ENCODE measurements at regions of chr2 and their contacts with region 1.

Region 1: GRCh38 chr2:152635635-152636298 is 81.5 kb downstream of the PRPF40A start:
- DNase-seq: peak; percentile 78
- ATAC-seq: peak; percentile 90
- H3K4me3 Mint-ChIP-seq: no peak overlapping the region
- H3K27ac Mint-ChIP-seq: no peak overlapping the region
- H3K4me1 Mint-ChIP-seq: no peaks in the 10 kb centered on the region
- H3K27me3 Mint-ChIP-seq: no peaks in the 10 kb centered on the region
- CTCF ChIP-seq: peak; percentile 86

Region 2: GRCh38 chr2:152175458-152176325 is 460.1 kb before region 1 on chr2 and contains the start of gene STAM2:
- CTCF ChIA-PET with region 1: interaction called, 42 read pairs
- POLR2A ChIA-PET with region 1: no interaction called
- DNase-seq: peak; percentile 93
- ATAC-seq: peak; percentile 88
- H3K4me3 Mint-ChIP-seq: peak within 1 kb of the TSS; percentile 93
- H3K27ac Mint-ChIP-seq: peak within 1 kb of the TSS; percentile 99
- H3K4me1 Mint-ChIP-seq: peaks cover 10% of the 10 kb centered on the region
- H3K27me3 Mint-ChIP-seq: peaks cover 20% of the 10 kb centered on the region
- CTCF ChIP-seq: peak; percentile 91
- total RNA-seq, gene STAM2: 9.0 to 12.0 TPM (median 11.1 TPM) in 3 replicates

Region 3: DNA sequence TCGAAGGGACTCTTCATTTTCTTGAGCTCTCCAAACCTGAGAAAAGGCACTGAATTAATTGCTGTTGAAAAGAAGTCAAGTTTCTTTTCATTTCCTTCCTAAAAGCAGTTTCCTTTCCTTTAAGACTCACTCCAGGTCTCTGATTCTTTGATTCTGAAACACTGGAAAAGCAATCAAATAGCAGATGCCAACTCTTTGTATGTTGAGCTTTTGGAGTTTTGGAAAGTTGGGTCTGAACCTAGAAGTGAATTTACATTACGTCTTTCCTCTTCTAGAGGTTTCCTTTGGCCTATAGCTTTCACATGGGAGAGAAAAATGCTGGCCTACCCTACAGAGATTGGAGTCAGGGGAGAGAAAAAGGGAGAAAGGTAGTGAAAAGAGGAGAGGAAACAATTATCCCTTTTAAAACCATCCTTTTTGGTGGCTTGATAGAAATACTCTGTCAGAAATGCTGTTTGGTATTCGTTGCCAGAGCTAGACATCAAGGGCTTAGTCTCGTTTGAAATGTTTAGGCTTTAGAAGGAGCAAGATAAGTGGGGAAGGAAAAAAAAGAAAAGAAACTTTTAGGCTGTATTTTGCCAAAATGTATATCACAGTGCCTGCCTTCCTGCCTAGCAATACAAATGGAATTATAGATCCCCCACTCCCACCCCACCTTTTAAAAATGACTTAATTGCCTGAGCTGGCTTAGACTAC is 106.2 kb before region 1 on chr2:
- CTCF ChIA-PET with region 1: no interaction called
- POLR2A ChIA-PET with region 1: no interaction called
- DNase-seq: no peak
- ATAC-seq: no peak
- H3K4me3 Mint-ChIP-seq: no peak overlapping the region
- H3K27ac Mint-ChIP-seq: peak overlapping the region; percentile 62
- H3K4me1 Mint-ChIP-seq: peaks cover 33% of the 10 kb centered on the region
- H3K27me3 Mint-ChIP-seq: no peaks in the 10 kb centered on the region
- CTCF ChIP-seq: no peak

Region 4: DNA sequence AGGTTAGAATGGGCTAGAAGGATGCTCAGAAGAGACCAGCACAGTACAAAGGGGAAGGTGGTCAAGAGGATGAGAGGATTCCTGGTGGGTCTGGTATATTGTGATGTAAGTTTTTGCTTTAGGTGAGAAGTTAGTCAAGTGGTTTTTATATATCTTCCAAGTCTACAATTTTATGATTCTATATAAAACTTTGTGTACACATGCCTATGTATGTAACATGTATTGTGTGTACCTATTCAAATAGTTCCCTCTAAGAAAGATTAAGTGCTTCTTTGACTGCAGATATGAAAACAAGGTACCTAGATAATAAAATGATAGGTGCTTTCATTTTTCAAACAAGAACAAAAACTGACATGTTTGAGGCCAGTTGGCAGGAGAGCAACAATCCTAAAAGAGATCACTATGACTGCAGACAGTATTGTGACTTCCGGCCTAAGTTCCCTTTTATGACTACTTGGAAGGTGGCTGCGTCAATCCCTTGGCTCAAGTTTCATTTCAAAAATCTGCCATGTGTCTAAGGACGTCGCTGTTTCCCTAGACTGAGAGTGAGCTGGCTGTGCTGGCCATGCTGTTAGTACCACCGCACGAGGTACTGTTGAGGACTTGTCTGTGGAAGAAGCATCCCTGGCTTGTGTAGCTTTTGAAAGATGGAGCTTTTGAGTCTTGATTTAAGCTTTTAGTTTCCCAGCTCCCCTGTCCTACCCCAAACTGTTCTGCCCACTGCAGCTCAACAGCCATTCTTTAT is 41.6 kb before region 1 on chr2:
- CTCF ChIA-PET with region 1: no interaction called
- POLR2A ChIA-PET with region 1: no interaction called
- DNase-seq: no peak
- ATAC-seq: no peak
- H3K4me3 Mint-ChIP-seq: no peak overlapping the region
- H3K27ac Mint-ChIP-seq: no peak overlapping the region
- H3K4me1 Mint-ChIP-seq: peaks cover 9% of the 10 kb centered on the region
- H3K27me3 Mint-ChIP-seq: no peaks in the 10 kb centered on the region
- CTCF ChIP-seq: no peak

Region 5: DNA sequence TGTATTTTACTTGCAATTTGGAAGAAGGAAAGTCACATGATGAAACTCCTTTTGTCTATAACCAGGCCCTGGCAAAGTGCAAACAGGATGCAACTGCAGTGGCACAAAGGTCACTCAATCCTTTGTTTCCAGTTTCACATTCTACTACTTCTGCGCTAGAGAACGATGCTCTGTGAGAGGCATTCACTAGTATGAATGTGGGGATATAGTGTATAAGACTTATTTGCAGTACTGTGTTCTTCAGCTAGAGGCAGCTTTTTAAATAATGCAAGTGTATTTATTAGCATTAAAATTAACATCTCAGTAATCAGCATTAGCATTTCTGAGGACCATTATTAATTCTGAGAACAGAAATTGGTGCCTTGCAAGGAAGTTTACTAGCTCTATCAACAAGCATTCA is 12.6 kb after region 1 on chr2:
- CTCF ChIA-PET with region 1: interaction called, 37 read pairs
- POLR2A ChIA-PET with region 1: no interaction called
- DNase-seq: no peak
- ATAC-seq: peak; percentile 38
- H3K4me3 Mint-ChIP-seq: no peak overlapping the region
- H3K27ac Mint-ChIP-seq: peak overlapping the region; percentile 55; the same call in 1 of the 2 replicates
- H3K4me1 Mint-ChIP-seq: peaks cover 23% of the 10 kb centered on the region
- H3K27me3 Mint-ChIP-seq: no peaks in the 10 kb centered on the region
- CTCF ChIP-seq: no peak